ENCODE measurements at regions of chr5 and their contacts with region 1.

Region 1: DNA sequence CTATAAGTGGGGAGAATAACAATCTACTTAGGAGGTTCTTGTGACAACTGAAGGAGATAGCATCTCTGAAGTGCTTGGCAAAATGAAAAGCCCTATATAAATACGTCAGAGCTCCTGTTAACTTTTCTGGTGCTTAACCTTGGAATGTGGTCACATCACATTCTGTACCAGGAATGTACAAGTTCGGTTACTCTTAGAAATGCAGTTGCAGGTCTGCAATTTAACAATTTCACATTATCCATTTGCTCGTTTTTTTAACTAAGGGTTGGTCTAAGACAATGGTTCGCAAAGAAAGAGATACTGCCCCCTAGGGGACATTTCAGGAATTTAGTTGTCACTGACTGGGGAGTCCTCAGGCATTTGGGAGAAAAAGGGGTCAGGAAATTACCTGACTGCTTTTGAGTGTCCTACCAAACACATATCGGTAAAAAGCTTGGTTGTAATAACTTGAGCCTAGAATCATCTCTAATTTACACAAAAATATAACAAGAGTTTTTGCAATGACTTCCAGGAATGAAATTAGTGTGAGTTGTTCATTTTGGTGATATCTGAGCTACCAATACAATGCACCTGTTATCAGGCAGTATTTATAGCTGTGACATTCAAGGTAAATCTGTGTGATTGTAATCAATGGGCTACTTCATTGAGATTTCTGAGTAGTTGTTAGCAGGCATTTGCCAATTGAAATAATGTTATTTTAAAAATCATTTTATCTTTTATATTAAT is 5.4 kb upstream of the HBEGF start:
- DNase-seq: peak; percentile 32
- ATAC-seq: peak; percentile 84
- H3K4me3 Mint-ChIP-seq: no peak overlapping the region
- H3K27ac Mint-ChIP-seq: no peak overlapping the region
- H3K4me1 Mint-ChIP-seq: peaks cover 7% of the 10 kb centered on the region
- H3K27me3 Mint-ChIP-seq: no peaks in the 10 kb centered on the region; the same call in 1 of the 2 replicates
- CTCF ChIP-seq: peak; percentile 78

Region 2: DNA sequence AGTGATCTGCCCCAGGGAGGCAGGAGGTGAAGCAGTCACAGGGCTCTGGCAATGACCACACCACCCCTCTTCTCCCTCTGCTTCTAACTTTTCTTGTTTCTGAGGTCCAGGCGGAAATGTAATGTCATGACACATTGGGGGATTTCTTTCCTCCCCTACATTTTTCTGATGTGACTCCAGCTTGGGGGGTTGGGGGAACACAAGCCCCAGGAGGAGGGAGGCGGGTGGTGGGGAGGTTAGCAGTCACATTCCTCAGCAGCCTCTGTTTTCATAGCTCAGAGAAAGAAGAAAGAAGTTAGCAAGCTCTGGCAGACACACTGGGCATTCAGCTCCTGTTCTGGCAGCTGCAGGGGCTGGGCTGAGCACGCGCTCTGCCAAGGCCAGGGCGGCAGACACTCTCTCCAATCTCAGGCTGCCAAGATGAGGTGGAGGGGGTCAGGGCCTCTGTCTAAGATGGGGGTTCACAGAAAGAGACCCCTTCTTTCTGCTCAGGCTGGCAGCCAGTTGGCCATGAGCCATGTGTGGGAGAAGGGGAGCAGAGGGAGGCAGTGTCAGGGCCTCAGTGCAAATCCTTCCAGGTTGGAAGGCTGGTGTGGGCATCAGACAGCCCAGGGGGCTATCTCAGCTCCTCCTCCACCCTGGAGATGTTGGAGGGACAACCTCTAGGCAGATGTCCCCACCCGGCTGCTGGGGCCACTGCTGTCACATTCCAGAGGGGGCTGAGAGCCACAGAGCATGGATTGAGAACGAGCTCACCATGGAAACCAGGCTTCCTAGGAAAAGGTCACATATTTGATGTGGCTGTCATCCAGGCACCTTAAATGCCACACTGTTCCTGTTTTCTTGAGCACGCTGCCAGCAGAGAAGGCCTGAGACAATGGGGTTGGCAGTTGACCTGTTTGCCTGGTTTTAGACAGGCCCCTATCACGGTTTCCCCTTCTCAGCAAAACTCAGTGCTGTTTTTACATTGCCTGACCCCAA is 28.7 kb before region 1 on chr5:
- CTCF ChIA-PET with region 1: interaction called, 79 read pairs
- POLR2A ChIA-PET with region 1: interaction called, 7 read pairs
- DNase-seq: no peak
- ATAC-seq: no peak
- H3K4me3 Mint-ChIP-seq: no peak overlapping the region
- H3K27ac Mint-ChIP-seq: no peak overlapping the region
- H3K4me1 Mint-ChIP-seq: peaks cover 12% of the 10 kb centered on the region
- H3K27me3 Mint-ChIP-seq: peaks cover 3% of the 10 kb centered on the region
- CTCF ChIP-seq: no peak

Region 3: GRCh38 chr5:140362860-140363630 is 11.3 kb after region 1 on chr5:
- CTCF ChIA-PET with region 1: interaction called, 90 read pairs
- POLR2A ChIA-PET with region 1: interaction called, 11 read pairs
- DNase-seq: peak; percentile 95
- ATAC-seq: peak; percentile 88
- H3K4me3 Mint-ChIP-seq: peak overlapping the region; percentile 79
- H3K27ac Mint-ChIP-seq: no peak overlapping the region
- H3K4me1 Mint-ChIP-seq: peaks cover 7% of the 10 kb centered on the region
- H3K27me3 Mint-ChIP-seq: peaks cover 9% of the 10 kb centered on the region
- CTCF ChIP-seq: peak; percentile 96

Measured in WTC11 (cell line).